Uterus (tissue), 4 donors: ENCODE measurements at regions of chr10 and their contacts with region 1.

Region 1: GRCh38 chr10:75662715-75663114 is 231.3 kb downstream of the LRMDA start:
- DNase-seq: peak; percentile 76 to 91
- H3K4me3 ChIP-seq: no peak overlapping the region
- H3K27ac ChIP-seq: peak overlapping the region; percentile 76 to 97
- H3K4me1 ChIP-seq: peaks cover 3 to 12% of the 10 kb centered on the region in 2 donors
- H3K27me3 ChIP-seq: no peaks in the 10 kb centered on the region
- CTCF ChIP-seq: peak in 1 of 4 experiments; percentile 1
- POLR2A ChIP-seq: no peak

Region 2: DNA sequence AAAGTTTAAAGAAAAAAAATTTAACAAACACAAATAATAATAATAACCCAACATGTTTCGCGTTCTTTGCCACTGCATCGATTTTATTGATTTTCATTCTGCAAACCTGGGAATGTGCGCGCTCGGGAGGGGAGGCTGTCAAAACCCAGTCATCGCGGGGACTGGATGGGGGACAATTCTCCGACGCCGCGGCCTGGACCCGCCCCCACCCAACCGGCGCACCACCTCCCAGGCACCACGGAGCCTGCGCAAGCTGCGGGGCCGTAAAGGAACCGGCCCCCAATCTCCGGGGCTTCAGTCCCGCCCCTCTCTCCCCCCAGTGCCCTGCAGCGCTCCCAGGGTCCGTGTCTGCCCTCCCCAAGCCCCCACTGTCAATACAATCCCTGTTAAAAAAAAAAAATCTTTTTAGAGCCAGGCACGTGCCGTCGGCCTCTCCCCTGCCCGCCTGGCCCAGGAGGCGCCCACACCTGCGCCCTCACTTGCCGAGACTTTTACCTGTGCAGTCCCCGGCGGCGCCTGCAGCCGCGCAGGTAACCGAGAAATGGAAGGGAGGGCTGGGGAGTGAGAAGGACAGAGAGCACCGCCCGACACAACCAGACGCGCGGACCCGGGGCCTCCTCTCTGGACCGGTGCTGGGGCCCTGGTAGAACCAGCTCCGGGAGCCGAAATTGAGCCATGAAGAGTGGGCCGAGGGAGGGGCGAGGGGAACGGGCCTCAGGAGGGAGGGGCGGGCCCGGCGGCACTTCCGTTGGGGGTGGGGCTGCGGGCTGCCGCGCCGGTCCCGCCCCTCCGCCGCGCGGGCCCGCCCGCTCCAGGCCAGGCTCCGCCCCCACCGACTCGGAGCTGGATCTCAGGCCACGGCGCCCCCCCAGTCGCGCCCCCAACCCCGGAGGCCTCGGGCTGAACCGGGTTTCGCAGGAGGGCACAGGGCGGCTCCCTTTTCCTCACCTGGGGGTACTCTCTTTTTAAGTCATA is 253.5 kb before region 1 on chr10:
- intact Hi-C with region 1: loop called (anchors 5 kb)
- DNase-seq: peak; percentile 81 to 82
- H3K4me3 ChIP-seq: peak overlapping the region; percentile 61 to 83
- H3K27ac ChIP-seq: peak overlapping the region; percentile 97 to 98
- H3K4me1 ChIP-seq: peaks cover 0 to 7% of the 10 kb centered on the region in 2 donors
- H3K27me3 ChIP-seq: no peaks in the 10 kb centered on the region
- CTCF ChIP-seq: no peak
- POLR2A ChIP-seq: peak in 1 of 2 donors; percentile 23

Region 3: GRCh38 chr10:75764974-75765788 is 102.5 kb after region 1 on chr10:
- intact Hi-C with region 1: no loop called
- DNase-seq: no peak
- H3K4me3 ChIP-seq: no peak overlapping the region
- H3K27ac ChIP-seq: peak overlapping the region in 1 of 2 donors; percentile 0
- H3K4me1 ChIP-seq: no peaks in the 10 kb centered on the region
- H3K27me3 ChIP-seq: no peaks in the 10 kb centered on the region
- CTCF ChIP-seq: no peak
- POLR2A ChIP-seq: no peak